ENCODE measurements at regions of chr7 and their contacts with region 1.

Region 1: GRCh38 chr7:2109936-2110585 is 122.7 kb downstream of the MAD1L1 start:
- DNase-seq: peak; percentile 88
- ATAC-seq: peak; percentile 97
- H3K4me3 Mint-ChIP-seq: no peak overlapping the region
- H3K27ac Mint-ChIP-seq: peak overlapping the region; percentile 73
- H3K4me1 Mint-ChIP-seq: peaks cover 36% of the 10 kb centered on the region
- H3K27me3 Mint-ChIP-seq: no peaks in the 10 kb centered on the region

Region 2: DNA sequence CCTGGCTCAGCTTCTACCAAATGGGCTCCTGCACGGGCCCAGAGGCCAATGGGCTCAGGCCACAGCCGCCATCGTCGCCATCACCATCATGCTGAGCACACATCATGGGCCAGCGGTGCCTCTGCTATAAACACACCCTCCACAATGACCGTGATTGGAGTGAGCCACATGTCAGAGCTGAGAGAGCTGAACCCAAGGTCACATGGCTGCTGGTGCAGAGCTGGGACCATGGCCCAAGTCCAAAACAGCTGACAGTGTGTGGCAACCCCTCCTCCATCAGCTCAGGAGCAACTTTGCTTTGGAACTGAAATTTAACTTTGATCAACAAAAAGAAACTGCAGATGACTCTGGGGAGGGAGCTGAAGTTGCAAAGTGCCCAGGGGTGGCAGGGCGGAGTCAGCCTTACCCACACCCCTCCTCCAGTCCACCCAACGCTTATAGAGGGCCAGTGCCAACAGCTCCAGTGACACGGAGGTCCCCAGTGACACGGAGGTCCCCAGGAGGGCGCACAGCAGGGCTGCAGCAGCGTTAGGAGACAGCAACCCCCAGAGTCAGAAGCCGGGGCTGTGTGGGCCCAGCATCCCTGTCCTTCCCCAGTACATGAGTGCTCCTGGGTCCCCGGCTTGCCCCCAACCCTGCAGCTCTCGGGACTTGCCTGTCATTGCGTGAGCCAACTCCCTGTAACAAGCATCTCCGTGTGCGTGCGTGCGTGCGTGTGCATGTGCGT is 190.4 kb before region 1 on chr7:
- CTCF ChIA-PET with region 1: no interaction called
- POLR2A ChIA-PET with region 1: no interaction called
- intact Hi-C with region 1: loop called in 1 of 2 experiments (anchors 5 kb)
- DNase-seq: no peak
- ATAC-seq: peak; percentile 17
- H3K4me3 Mint-ChIP-seq: peak overlapping the region; percentile 68
- H3K27ac Mint-ChIP-seq: peak overlapping the region; percentile 76
- H3K4me1 Mint-ChIP-seq: peaks cover 70% of the 10 kb centered on the region
- H3K27me3 Mint-ChIP-seq: peaks cover 11% of the 10 kb centered on the region

Region 3: DNA sequence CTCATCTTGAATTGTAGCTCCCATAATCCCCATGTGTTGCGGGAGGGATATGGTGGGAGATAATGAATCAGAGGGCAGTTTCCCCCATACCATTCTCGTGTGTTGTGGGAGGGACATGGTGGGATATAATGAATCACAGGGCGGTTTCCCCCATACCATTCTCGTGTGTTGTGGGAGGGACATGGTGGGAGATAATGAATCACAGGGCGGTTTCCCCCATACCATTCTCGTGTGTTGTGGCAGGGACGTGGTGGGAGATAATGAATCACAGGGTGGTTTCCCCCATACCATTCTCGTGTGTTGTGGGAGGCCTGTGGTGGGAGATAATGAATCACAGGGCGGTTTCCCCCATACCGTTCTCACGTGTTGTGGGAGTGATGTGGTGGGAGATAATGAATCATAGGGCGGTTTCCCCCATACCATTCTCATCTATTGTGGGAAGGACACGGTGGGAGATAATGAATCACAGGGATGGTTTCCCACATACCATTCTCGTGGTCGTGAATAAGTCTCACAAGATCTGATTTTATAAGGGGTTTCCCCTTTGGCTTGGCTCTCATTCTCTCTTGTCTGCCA is 148.3 kb before region 1 on chr7:
- CTCF ChIA-PET with region 1: no interaction called
- POLR2A ChIA-PET with region 1: no interaction called
- intact Hi-C with region 1: loop called in 1 of 2 experiments (anchors 2 kb)
- DNase-seq: peak; percentile 75
- ATAC-seq: peak; percentile 78
- H3K4me3 Mint-ChIP-seq: peak overlapping the region; percentile 55
- H3K27ac Mint-ChIP-seq: peak overlapping the region; percentile 82
- H3K4me1 Mint-ChIP-seq: peaks cover 17% of the 10 kb centered on the region
- H3K27me3 Mint-ChIP-seq: no peaks in the 10 kb centered on the region

Region 4: GRCh38 chr7:2019607-2020511 is 90.2 kb before region 1 on chr7:
- CTCF ChIA-PET with region 1: no interaction called
- POLR2A ChIA-PET with region 1: no interaction called
- intact Hi-C with region 1: loop called in 1 of 2 experiments (anchors 1 kb)
- DNase-seq: peak; percentile 81
- ATAC-seq: peak; percentile 93
- H3K4me3 Mint-ChIP-seq: peak overlapping the region; percentile 45
- H3K27ac Mint-ChIP-seq: peak overlapping the region; percentile 86
- H3K4me1 Mint-ChIP-seq: peaks cover 25% of the 10 kb centered on the region
- H3K27me3 Mint-ChIP-seq: no peaks in the 10 kb centered on the region

Region 5: GRCh38 chr7:2232766-2233520 is 122.9 kb after region 1 on chr7 and contains the start of gene MAD1L1:
- CTCF ChIA-PET with region 1: no interaction called
- POLR2A ChIA-PET with region 1: no interaction called
- intact Hi-C with region 1: loop called in 1 of 2 experiments (anchors 5 kb)
- DNase-seq: peak; percentile 95
- ATAC-seq: peak; percentile 94
- H3K4me3 Mint-ChIP-seq: peak within 1 kb of the TSS; percentile 83
- H3K27ac Mint-ChIP-seq: peak within 1 kb of the TSS; percentile 86
- H3K4me1 Mint-ChIP-seq: peaks cover 26% of the 10 kb centered on the region
- H3K27me3 Mint-ChIP-seq: no peaks in the 10 kb centered on the region
- total RNA-seq, gene MAD1L1: 50.2 to 61.7 TPM